ENCODE measurements at regions of chr14 and their contacts with region 1.

Region 1: DNA sequence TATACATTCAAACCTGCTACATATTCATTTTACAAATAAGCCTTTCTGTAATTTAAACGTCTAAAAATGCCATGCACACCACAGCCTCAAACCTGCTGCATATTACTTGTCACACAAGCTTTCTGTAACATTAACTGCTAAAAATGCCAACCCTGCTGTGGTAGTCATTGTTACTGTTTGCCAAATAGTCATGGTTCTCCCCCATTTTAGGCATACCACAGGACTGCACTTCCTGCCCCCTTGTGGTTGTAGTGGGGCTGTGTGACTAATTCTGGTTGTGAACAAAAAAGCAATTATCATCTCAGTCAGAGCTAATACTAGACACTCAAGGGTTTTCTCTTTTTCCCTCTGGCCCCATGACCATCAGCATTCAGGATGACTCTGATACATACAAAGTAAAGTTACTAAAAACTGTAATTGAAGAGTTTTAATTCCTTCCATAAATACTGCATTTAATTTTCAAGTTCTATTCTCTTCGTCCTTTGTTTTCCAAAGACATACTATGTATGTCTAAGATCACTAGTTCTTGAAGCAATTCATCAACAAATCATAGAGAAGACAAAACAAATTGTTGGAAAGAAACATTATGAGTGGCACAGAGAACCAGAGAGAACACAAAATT is 5.7 kb upstream of the SLC35F4 start:
- DNase-seq: no peak
- H3K4me3 ChIP-seq: no peak overlapping the region
- CTCF ChIP-seq: peak; percentile 79

Region 2: DNA sequence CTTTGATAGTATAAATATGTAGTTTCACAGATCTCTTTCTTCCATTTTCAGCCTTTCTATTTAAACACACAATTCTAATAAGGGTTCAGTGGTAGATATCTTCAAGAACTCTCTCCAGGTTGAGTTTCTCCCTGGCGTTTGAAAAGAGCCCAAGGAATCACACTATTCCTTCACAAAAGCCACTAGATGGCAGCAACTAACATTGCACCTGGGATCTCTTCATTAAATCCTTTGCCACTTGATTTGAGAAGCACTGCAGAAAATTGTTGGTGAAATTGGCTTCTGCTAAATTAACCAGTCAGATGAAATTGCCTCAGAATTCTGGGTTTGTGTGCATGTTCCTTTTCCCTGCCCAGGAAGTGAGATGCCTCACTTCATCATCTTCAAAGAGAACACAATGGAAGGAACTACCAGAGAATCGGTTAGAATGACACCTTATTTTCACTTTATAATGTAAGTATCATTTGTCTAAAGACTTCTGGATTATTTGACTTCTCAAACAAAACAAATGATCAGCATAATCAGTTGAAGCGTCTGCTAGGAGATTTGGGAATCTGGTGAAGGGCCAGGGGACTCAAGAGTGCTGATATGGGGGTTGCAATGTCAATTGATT is 384.7 kb before region 1 on chr14:
- CTCF ChIA-PET with region 1: interaction called, 14 read pairs
- POLR2A ChIA-PET with region 1: no interaction called
- DNase-seq: no peak
- H3K4me3 ChIP-seq: no peak overlapping the region
- CTCF ChIP-seq: peak; percentile 55

Measured in AG04449 (cell line).